ENCODE measurements at regions of chr11 and their contacts with region 1.

Region 1: GRCh38 chr11:64269380-64270234 is 14.9 kb downstream of the BAD start:
- DNase-seq: peak; percentile 97
- H3K4me3 Mint-ChIP-seq: peak overlapping the region; percentile 88
- H3K27ac Mint-ChIP-seq: peak overlapping the region; percentile 92
- H3K4me1 Mint-ChIP-seq: peaks cover 26% of the 10 kb centered on the region
- H3K27me3 Mint-ChIP-seq: no peaks in the 10 kb centered on the region

Region 2: DNA sequence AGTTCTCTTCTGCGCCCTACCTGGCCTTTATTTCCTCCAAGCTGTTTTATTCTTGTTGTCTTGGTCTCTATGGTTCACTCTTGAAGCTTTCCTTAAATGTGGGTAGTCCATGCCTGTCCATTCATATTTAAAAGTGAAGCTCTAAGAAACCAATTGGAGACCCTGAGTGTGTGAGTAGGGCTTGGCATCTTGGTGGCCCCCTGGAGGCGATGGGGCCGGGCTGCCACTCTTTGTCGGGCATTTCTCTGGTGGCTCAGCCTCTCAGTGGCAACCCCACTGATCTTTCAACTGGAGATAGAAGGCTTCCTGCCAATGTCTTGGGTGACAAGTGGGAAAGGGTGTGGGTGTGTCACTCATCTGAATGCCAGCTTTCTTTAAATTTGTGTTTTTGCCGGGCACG is 52.7 kb before region 1 on chr11:
- CTCF ChIA-PET with region 1: no interaction called
- POLR2A ChIA-PET with region 1: no interaction called
- DNase-seq: no peak
- H3K4me3 Mint-ChIP-seq: no peak overlapping the region
- H3K27ac Mint-ChIP-seq: no peak overlapping the region
- H3K4me1 Mint-ChIP-seq: peaks cover 16% of the 10 kb centered on the region
- H3K27me3 Mint-ChIP-seq: no peaks in the 10 kb centered on the region

Region 3: DNA sequence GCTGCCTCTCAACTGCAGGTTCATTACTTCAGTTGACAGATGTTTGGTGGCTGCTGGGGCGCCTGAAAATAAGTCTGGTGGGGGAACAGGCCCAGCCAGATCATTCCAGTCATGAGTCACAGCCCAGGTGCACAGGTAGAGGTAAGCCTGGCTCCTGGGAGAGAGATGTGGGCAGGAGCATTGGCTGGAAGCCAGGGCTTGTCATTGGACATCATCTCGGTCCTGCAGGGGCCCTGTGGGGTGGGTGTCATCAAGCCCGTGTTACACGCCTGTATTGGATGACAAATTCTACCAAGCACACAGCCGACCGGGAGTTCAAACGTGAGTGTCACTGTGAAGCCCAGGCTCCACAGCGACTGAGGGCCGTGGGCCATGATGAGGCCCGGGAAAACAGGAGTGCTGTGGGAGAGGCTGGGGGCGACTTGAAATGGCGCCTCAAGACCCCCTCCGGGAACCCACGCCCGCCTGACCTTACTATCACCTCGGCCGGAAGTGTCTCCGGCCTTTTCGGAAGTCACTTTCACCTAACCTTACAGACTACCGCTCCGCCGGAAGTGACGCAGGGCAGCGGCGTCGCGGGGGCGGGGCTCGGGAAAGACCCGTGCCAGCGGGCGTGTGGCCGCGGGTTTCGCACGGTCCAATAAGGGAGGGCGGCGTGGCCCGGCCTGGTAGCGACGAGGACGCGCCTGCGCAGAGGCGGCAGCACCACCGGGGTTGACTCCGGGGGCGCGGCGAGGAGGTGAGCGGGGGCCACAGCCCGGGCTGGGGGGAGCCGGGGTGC is 29.0 kb before region 1 on chr11 and contains the start of gene FKBP2:
- CTCF ChIA-PET with region 1: interaction called, 162 read pairs
- POLR2A ChIA-PET with region 1: interaction called, 4 read pairs
- DNase-seq: peak; percentile 97
- H3K4me3 Mint-ChIP-seq: peak within 1 kb of the TSS; percentile 88
- H3K27ac Mint-ChIP-seq: peak within 1 kb of the TSS; percentile 96
- H3K4me1 Mint-ChIP-seq: peaks cover 60% of the 10 kb centered on the region
- H3K27me3 Mint-ChIP-seq: no peaks in the 10 kb centered on the region
- total RNA-seq, gene FKBP2: 21.9 to 24.8 TPM

Region 4: DNA sequence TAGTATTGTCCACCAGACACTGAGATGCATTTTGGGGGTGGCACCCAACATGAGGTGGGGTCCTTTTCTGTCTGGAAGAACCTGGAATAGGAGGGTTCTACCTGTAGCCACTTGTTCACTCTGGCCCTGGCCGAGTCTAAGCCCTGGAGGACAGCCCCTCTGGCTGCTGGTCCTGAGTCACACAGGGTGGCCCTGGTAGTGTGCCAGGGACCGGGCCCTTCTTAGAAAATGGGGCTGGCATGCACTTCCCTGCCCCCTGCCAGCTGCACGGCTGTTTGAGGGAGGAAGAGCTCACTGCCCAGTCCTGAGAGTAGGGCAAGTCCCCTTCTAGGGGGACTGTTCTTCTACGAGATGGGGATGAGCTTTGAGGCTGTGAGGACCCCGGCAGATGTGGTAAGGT is 16.1 kb before region 1 on chr11:
- CTCF ChIA-PET with region 1: interaction called, 162 read pairs
- POLR2A ChIA-PET with region 1: no interaction called
- DNase-seq: no peak
- H3K4me3 Mint-ChIP-seq: peak overlapping the region; percentile 3
- H3K27ac Mint-ChIP-seq: no peak overlapping the region
- H3K4me1 Mint-ChIP-seq: peaks cover 16% of the 10 kb centered on the region
- H3K27me3 Mint-ChIP-seq: no peaks in the 10 kb centered on the region

Region 5: GRCh38 chr11:64284048-64284961 is 14.7 kb after region 1 on chr11 and contains the start of gene BAD:
- CTCF ChIA-PET with region 1: interaction called, 37 read pairs
- POLR2A ChIA-PET with region 1: interaction called, 4 read pairs
- DNase-seq: peak; percentile 95
- H3K4me3 Mint-ChIP-seq: peak within 1 kb of the TSS; percentile 82
- H3K27ac Mint-ChIP-seq: peak within 1 kb of the TSS; percentile 91
- H3K4me1 Mint-ChIP-seq: peaks cover 30% of the 10 kb centered on the region
- H3K27me3 Mint-ChIP-seq: peaks cover 1% of the 10 kb centered on the region
- total RNA-seq, gene BAD: 32.0 to 34.2 TPM

Measured in activated CD4-positive, alpha-beta T cell treated with anti-CD3 and anti-CD28 coated beads, Interleukin-2, amount 10 ng/mL, durations not matched to agents 7 days and 5 days (primary cell).